Activated CD4-positive, alpha-beta T cell treated with anti-CD3 and anti-CD28 coated beads, Interleukin-2, amount 10 ng/mL, durations not matched to agents 24 days and 14 days (primary cell): ENCODE measurements at regions of chr6 and their contacts with region 1.

Region 1: GRCh38 chr6:126339796-126340609 is at the start of gene CENPW:
- DNase-seq: peak; percentile 99
- H3K4me3 Mint-ChIP-seq: no peak within 1 kb of the TSS
- H3K27ac Mint-ChIP-seq: no peak within 1 kb of the TSS
- H3K4me1 Mint-ChIP-seq: peaks cover 26% of the 10 kb centered on the region
- H3K27me3 Mint-ChIP-seq: no peaks in the 10 kb centered on the region
- total RNA-seq, gene CENPW: 42.7 and 45.8 TPM in 2 replicates

Region 2: DNA sequence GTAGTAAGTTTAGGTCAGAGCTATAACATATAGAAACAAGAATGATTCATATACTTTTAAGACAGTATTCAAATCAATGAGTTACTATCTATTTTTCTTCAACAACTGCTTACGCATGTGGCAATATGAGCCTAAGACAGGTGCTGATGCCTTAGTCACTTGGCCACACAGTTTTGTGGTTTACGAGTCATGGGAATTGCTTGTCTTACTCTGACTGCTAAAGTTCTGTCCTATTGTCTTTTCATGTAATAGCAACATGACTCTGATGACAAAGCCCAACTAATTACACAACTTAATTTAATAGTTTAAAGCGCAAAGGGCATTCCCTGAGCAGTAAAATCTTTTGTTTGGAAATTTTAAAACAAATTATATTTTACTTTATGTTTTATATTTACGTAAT is 159.4 kb before region 1 on chr6:
- intact Hi-C with region 1: loop called (anchors 5 kb)
- DNase-seq: no peak
- H3K4me3 Mint-ChIP-seq: no peak overlapping the region
- H3K27ac Mint-ChIP-seq: no peak overlapping the region
- H3K4me1 Mint-ChIP-seq: peaks cover 1% of the 10 kb centered on the region
- H3K27me3 Mint-ChIP-seq: peaks cover 5% of the 10 kb centered on the region

Region 3: DNA sequence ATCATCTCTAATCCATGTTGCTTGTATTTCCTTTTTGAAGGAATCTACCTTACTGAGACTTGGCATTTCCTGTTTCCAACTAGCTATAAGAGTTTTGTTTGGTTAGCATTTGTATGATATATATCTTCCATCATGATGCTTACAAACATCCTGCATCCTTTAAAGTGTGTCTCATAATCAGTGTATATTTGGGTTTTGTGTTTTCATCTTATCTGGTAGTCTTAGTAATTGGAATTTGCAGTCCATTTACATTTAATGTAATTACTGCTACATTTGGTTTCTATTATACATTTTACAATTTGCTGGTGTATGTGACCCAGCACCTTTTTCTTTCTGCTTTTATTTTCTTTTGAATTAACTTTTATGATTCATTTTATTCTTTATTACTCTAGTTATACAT is 12.5 kb after region 1 on chr6:
- intact Hi-C with region 1: no loop called
- DNase-seq: no peak
- H3K4me3 Mint-ChIP-seq: no peak overlapping the region
- H3K27ac Mint-ChIP-seq: no peak overlapping the region
- H3K4me1 Mint-ChIP-seq: peaks cover 6% of the 10 kb centered on the region
- H3K27me3 Mint-ChIP-seq: no peaks in the 10 kb centered on the region